Psoas muscle (tissue), 8 donors: ENCODE measurements at regions of chr1 and their contacts with region 1.

Region 1: DNA sequence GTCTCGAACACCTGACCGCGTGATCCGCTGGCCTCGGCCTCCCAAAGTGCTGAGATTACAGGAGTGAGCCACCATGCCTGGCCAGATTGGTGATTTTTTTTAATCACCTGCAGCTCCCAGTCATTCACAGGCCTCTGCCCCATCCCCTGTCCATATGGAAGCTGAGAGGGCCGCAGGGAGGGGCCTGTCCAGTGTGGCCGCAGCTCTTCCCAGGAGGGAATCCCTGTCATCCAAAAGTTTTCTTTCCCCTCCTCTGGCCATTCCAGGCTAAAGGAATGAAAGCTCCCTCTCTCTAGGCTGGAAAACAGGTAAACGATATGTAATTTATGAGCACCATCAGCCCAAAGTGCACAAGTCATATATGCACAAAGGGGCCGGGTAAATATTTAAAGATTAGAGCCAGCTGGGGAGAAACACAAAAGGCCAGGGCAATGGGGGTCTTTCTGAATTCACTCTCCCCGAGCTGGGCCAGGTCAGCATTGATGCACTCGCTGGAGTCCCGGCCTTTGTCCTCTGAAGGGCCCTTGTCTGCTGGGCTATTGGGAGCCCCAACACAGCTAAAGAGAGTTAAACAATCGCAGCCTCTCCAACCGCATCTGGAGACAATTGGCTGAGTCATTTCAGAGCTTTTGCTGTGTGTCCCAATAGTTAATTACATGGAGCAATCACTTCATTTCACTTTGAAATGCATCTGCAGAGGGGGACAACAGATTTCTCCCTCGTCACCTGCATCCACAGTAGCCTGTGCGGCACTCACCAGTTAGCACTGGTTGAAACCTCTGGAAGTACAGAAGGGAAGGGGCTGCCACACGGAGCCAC is 3.8 kb upstream of the HES3 start:
- DNase-seq: peak in 1 of 2 donors; percentile 23
- ATAC-seq: no peak
- H3K4me3 ChIP-seq: no peak overlapping the region
- H3K27ac ChIP-seq: no peak overlapping the region
- H3K4me1 ChIP-seq: peaks cover 6% of the 10 kb centered on the region
- H3K27me3 ChIP-seq: peaks cover 0 to 51% (median 15%) of the 10 kb centered on the region in 3 donors
- CTCF ChIP-seq: no peak

Region 2: GRCh38 chr1:6205849-6206519 is 34.2 kb before region 1 on chr1 and contains the start of gene RNF207:
- intact Hi-C with region 1: loop called in 1 of 2 experiments (anchors 5 kb)
- DNase-seq: peak; percentile 55 to 76
- ATAC-seq: peak; percentile 70 to 76 (median 70)
- H3K4me3 ChIP-seq: peak within 1 kb of the TSS; percentile 76
- H3K27ac ChIP-seq: peak within 1 kb of the TSS; percentile 69
- H3K4me1 ChIP-seq: peaks cover 19% of the 10 kb centered on the region
- H3K27me3 ChIP-seq: no peaks in the 10 kb centered on the region
- CTCF ChIP-seq: no peak
- total RNA-seq, gene RNF207: 3.4 to 13.6 (median 4.6) TPM

Region 3: GRCh38 chr1:6330410-6330911 is 90.3 kb after region 1 on chr1:
- intact Hi-C with region 1: no loop called
- DNase-seq: no peak
- ATAC-seq: no peak
- H3K4me3 ChIP-seq: no peak overlapping the region
- H3K27ac ChIP-seq: no peak overlapping the region
- H3K4me1 ChIP-seq: no peaks in the 10 kb centered on the region
- H3K27me3 ChIP-seq: peaks cover 0 to 2% (median 0%) of the 10 kb centered on the region in 3 donors
- CTCF ChIP-seq: no peak

Region 4: DNA sequence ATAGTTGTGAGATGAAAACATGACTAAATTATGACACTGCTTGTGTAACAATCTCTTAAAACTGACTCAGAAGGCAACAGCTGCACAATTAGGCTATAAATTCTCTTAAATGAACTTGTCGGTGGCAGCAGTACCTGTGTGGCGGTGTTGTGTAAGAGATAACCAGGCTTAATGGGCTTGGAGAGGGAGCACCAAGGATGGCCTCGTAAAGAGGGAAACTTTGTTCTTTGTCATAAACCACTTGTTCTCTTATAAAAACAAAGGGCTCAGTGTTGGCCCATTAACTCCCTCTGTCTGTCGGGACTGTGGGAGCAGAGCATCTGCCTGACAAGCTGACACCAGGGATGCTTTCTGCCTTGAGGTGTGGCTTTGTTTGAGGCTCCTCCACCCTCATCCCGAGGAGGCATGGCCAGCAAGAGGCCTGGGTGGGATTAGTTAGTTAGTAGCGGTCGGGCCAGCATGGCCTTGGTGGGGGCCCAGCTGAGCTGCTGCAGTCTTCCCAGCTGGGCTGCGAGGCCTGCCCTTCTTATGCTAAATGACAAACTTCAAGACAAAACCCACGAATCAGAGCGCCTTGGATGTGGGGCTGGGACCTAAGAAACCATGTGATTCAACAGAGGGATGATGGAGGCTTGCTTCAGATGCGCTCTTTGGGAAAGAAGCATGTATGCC is 716.5 kb after region 1 on chr1:
- intact Hi-C with region 1: no loop called
- DNase-seq: no peak
- ATAC-seq: no peak
- H3K4me3 ChIP-seq: no peak overlapping the region
- H3K27ac ChIP-seq: no peak overlapping the region
- H3K4me1 ChIP-seq: peaks cover 13% of the 10 kb centered on the region
- H3K27me3 ChIP-seq: no peaks in the 10 kb centered on the region
- CTCF ChIP-seq: no peak